ENCODE measurements at regions of chr11 and their contacts with region 1.

Region 1: DNA sequence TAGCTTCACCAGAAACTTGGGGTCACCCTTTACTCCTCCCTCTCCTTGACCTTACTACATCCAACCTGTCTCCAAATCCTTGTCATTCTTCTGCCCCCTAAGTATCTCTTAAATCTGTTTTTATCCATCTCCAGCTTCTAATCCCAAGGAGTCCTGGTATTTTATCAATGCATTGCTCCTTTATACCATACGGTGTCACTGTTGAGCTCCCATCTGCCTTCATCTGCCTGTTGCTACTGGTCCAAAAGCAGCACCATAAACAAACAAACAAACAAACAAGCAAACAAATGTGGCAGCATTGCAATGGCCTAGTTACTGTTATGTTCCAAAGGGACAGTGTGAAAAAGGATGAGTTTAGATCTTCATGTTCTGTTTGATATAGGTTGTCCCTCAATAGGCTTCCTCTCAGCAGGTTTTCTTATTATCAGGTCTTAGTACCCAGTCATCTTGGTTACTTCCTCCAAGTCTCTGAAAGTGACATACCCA is 34.2 kb downstream of the DNHD1 start:
- DNase-seq: no peak
- ATAC-seq: peak; percentile 90
- H3K4me3 Mint-ChIP-seq: no peak overlapping the region
- H3K27ac Mint-ChIP-seq: no peak overlapping the region
- H3K4me1 Mint-ChIP-seq: no peaks in the 10 kb centered on the region
- H3K27me3 Mint-ChIP-seq: no peaks in the 10 kb centered on the region; the same call in 1 of the 2 replicates
- CTCF ChIP-seq: peak; percentile 19; the same call in 1 of the 2 replicates

Region 2: DNA sequence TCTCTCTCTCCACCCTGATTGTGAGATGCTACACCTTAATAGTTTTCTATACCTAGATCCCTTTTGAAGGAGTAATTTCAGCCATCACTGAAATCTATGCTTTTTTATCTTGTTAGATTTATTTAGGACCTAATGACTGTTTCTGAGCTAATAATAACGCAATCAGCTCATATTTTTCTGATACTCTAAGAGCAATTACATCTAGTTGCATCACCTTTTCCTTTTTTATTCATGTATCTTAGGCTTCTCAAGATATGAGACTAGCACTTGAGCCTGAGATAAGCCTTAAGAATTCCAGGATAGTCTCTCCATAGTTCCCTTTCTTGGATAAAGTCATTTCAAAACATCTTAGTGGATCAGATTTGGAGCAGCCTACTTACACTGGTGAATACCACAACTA is 185.9 kb before region 1 on chr11:
- CTCF ChIA-PET with region 1: no interaction called
- POLR2A ChIA-PET with region 1: no interaction called
- DNase-seq: no peak
- ATAC-seq: no peak
- H3K4me3 Mint-ChIP-seq: no peak overlapping the region
- H3K27ac Mint-ChIP-seq: no peak overlapping the region
- H3K4me1 Mint-ChIP-seq: peaks cover 9% of the 10 kb centered on the region
- H3K27me3 Mint-ChIP-seq: no peaks in the 10 kb centered on the region
- CTCF ChIP-seq: no peak

Region 3: DNA sequence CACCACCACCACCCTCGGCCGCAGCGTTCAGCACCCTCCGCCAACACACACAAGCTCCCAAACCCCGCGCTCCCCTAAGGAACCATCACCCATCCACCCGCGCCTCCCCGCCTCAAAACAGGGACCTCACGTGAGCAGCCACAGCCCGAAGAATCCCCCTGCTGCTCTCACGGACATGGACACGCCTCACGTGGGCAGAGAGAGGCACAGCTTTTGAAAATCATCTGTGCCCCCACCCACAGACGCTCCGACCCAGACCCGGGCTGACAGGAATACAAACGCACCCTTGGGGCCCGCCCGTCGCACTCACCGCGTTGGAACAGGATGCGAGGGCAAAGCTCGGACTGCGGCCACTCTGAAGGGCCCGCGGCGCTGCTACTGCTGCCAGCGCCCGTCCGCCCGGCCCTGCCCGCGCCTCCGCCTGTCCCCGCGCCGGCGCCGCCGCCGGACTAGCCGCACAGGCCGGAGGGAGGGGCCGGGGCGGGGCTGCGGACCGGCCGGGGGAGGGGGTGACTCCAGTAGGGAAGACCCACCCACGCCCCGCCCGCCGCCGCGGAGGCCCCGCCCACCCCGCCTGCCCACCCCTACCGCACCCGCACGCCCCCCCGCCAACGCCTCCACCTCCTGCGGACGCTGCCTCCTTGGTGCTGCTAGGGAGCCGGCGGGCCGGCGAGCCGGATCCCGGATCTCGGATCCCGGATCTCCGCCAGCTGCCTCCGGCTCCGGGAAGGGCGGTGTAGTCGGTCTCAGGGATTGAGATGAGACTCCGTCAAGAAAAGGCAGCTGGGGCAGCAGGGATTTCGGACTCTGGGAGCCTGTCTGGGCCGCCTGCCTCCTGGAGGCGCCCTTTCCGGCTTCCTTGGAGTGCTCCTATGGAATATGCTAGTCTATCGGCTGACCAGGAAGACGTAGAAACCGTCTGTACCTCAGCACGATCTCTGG is 57.6 kb before region 1 on chr11 and contains the start of gene TRIM3:
- CTCF ChIA-PET with region 1: interaction called, 11 read pairs
- POLR2A ChIA-PET with region 1: no interaction called
- DNase-seq: peak; percentile 91
- ATAC-seq: peak; percentile 49
- H3K4me3 Mint-ChIP-seq: peak within 1 kb of the TSS; percentile 79
- H3K27ac Mint-ChIP-seq: peak within 1 kb of the TSS; percentile 93
- H3K4me1 Mint-ChIP-seq: peaks cover 28% of the 10 kb centered on the region
- H3K27me3 Mint-ChIP-seq: peaks cover 12% of the 10 kb centered on the region
- CTCF ChIP-seq: no peak
- total RNA-seq, gene TRIM3: 16.6 to 21.3 TPM (median 19.0 TPM) in 3 replicates

Region 4: DNA sequence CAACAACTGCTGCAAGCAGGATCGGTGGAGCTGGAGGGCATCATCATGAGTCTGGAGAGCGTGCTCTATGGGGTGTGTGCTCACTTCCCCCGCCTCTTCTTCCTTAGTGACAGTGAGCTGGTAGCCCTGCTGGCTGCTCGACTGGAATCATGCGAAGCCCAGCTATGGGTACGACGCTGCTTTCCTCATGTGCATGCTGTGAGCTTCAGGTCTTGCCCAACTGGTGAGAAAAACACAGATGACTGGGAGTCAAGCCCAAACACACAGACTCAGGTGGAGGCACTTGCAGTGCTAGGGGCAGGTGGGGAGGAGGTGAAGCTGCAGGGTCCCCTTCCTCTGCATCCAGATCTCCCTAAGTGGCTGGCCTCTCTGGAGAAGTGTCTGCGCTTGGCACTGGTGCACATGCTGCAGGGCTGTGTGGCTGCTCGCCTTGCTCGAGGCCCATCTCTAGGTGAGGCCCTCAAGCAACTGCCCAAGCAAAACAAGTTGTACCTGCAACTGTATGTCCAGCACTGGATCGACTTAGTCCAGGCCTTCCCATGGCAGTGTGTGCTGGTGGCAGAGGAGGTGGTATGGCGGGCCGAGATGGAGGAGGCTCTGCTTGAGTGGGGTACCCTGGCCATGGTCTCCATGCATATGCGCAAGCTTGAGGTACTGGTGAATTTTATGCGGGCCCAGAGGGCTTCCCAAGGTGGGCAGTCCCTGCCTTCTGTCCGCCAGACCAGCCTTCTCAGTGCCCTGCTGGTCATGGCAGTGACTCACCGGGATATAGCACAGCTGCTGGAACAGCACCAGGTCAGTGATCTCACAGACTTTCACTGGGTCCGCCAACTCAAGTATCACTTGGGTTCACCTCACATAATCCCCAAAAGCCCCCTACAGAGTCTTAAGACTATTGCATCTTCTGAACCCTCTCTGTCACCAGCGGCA is 13.9 kb after region 1 on chr11:
- CTCF ChIA-PET with region 1: interaction called, 13 read pairs
- POLR2A ChIA-PET with region 1: no interaction called
- DNase-seq: no peak
- ATAC-seq: no peak; the same call in 1 of the 2 replicates
- H3K4me3 Mint-ChIP-seq: no peak overlapping the region
- H3K27ac Mint-ChIP-seq: no peak overlapping the region
- H3K4me1 Mint-ChIP-seq: no peaks in the 10 kb centered on the region
- H3K27me3 Mint-ChIP-seq: no peaks in the 10 kb centered on the region
- CTCF ChIP-seq: no peak

Region 5: GRCh38 chr11:6586434-6587359 is 55.4 kb after region 1 on chr11:
- CTCF ChIA-PET with region 1: interaction called, 12 read pairs
- POLR2A ChIA-PET with region 1: no interaction called
- DNase-seq: no peak
- ATAC-seq: peak; percentile 84
- H3K4me3 Mint-ChIP-seq: no peak overlapping the region; the same call in 1 of the 2 replicates
- H3K27ac Mint-ChIP-seq: no peak overlapping the region
- H3K4me1 Mint-ChIP-seq: no peaks in the 10 kb centered on the region
- H3K27me3 Mint-ChIP-seq: no peaks in the 10 kb centered on the region
- CTCF ChIP-seq: no peak

Region 6: GRCh38 chr11:6612213-6613041 is 81.1 kb after region 1 on chr11 and contains the start of gene TAF10:
- CTCF ChIA-PET with region 1: interaction called, 13 read pairs
- POLR2A ChIA-PET with region 1: interaction called, 3 read pairs
- DNase-seq: peak; percentile 95
- ATAC-seq: peak; percentile 85
- H3K4me3 Mint-ChIP-seq: peak within 1 kb of the TSS; percentile 88
- H3K27ac Mint-ChIP-seq: peak within 1 kb of the TSS; percentile 86
- H3K4me1 Mint-ChIP-seq: peaks cover 8% of the 10 kb centered on the region
- H3K27me3 Mint-ChIP-seq: no peaks in the 10 kb centered on the region
- CTCF ChIP-seq: no peak
- total RNA-seq, gene TAF10: 165 to 186 TPM (median 178 TPM) in 3 replicates

Region 7: DNA sequence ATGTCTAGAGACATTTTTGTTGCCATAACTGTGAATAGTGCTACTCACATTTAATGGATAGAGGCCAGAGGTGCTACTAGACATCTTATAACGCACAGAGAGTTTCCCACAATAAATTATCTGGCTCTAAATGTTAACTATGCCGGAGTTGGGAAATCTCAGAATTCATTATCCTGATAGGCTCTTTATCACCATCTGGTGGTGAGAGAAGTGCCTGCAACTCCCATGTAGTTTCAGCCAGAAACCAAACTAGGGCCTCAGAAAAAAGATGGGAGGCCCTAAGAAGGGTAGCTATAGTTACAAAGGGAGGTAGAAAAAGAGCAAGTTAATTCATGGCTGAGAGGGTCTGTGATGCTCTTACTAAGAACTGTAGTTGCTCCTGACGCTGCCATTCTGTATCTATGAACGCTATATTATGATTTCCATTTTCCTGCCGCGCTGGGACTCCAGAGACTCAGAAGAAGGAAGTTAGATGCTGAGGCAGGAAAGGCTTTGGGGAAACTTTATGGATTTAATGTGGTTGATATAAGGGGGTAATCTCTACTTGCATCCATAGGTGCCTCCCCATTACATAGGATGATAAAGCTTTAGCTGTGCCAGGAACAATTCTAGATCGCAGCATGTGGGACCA is 174.7 kb after region 1 on chr11:
- CTCF ChIA-PET with region 1: interaction called, 18 read pairs
- POLR2A ChIA-PET with region 1: no interaction called
- DNase-seq: peak; percentile 44
- ATAC-seq: peak; percentile 68
- H3K4me3 Mint-ChIP-seq: no peak overlapping the region
- H3K27ac Mint-ChIP-seq: no peak overlapping the region
- H3K4me1 Mint-ChIP-seq: peaks cover 16% of the 10 kb centered on the region
- H3K27me3 Mint-ChIP-seq: peaks cover 8% of the 10 kb centered on the region; the same call in 1 of the 2 replicates
- CTCF ChIP-seq: peak; percentile 69

Measured in WTC11 (cell line).